B cell (primary cell): ENCODE measurements at regions of chr10 and their contacts with region 1.

Region 1: GRCh38 chr10:5813287-5814109 is at the start of gene GDI2:
- DNase-seq: peak; percentile 98
- ATAC-seq: peak; percentile 87
- H3K4me3 ChIP-seq: peak within 1 kb of the TSS; percentile 77 to 98 (median 93)
- H3K4me3 Mint-ChIP-seq: peak within 1 kb of the TSS; percentile 91
- H3K27ac ChIP-seq: peak within 1 kb of the TSS; percentile 89 to 94
- H3K27ac Mint-ChIP-seq: peak within 1 kb of the TSS; percentile 96
- H3K4me1 ChIP-seq: peaks cover 66 to 73% of the 10 kb centered on the region in 2 donors
- H3K4me1 Mint-ChIP-seq: peaks cover 73% of the 10 kb centered on the region
- H3K27me3 ChIP-seq: no peaks in the 10 kb centered on the region
- H3K27me3 Mint-ChIP-seq: no peaks in the 10 kb centered on the region
- CTCF ChIP-seq: no peak
- total RNA-seq, gene GDI2: 187 and 189 TPM in 2 replicates

Region 2: GRCh38 chr10:5033061-5033770 is 780.3 kb before region 1 on chr10:
- CTCF ChIA-PET with region 1: no interaction called
- POLR2A ChIA-PET with region 1: no interaction called
- intact Hi-C with region 1: no loop called
- DNase-seq: no peak
- ATAC-seq: no peak
- H3K4me3 ChIP-seq: no peak overlapping the region
- H3K4me3 Mint-ChIP-seq: no peak overlapping the region
- H3K27ac ChIP-seq: no peak overlapping the region
- H3K27ac Mint-ChIP-seq: no peak overlapping the region
- H3K4me1 ChIP-seq: no peaks in the 10 kb centered on the region
- H3K4me1 Mint-ChIP-seq: no peaks in the 10 kb centered on the region
- H3K27me3 ChIP-seq: peaks cover 0 to 3% (median 0%) of the 10 kb centered on the region in 4 experiments
- H3K27me3 Mint-ChIP-seq: no peaks in the 10 kb centered on the region
- CTCF ChIP-seq: no peak

Region 3: GRCh38 chr10:5446390-5446926 is 367.0 kb before region 1 on chr10:
- CTCF ChIA-PET with region 1: no interaction called
- POLR2A ChIA-PET with region 1: interaction called, 4 read pairs
- intact Hi-C with region 1: loop called (anchors 5 kb)
- DNase-seq: peak; percentile 89
- ATAC-seq: peak; percentile 96
- H3K4me3 ChIP-seq: peak overlapping the region; percentile 45 to 76 (median 62)
- H3K4me3 Mint-ChIP-seq: peak overlapping the region; percentile 91
- H3K27ac ChIP-seq: peak overlapping the region; percentile 30 to 44
- H3K27ac Mint-ChIP-seq: peak overlapping the region; percentile 87
- H3K4me1 ChIP-seq: peaks cover 20 to 21% of the 10 kb centered on the region in 2 donors
- H3K4me1 Mint-ChIP-seq: peaks cover 47% of the 10 kb centered on the region
- H3K27me3 ChIP-seq: no peaks in the 10 kb centered on the region
- H3K27me3 Mint-ChIP-seq: no peaks in the 10 kb centered on the region
- CTCF ChIP-seq: no peak

Region 4: GRCh38 chr10:5840314-5841307 is 27.1 kb after region 1 on chr10:
- CTCF ChIA-PET with region 1: interaction called, 25 read pairs
- POLR2A ChIA-PET with region 1: interaction called, 35 read pairs
- intact Hi-C with region 1: loop called (anchors 1 kb)
- DNase-seq: peak; percentile 92
- ATAC-seq: peak; percentile 82
- H3K4me3 ChIP-seq: peak overlapping the region in 4 of 5 experiments; percentile 55 to 63 (median 58)
- H3K4me3 Mint-ChIP-seq: peak overlapping the region; percentile 94
- H3K27ac ChIP-seq: peak overlapping the region; percentile 99 to 100
- H3K27ac Mint-ChIP-seq: peak overlapping the region; percentile 100
- H3K4me1 ChIP-seq: peaks cover 68 to 77% of the 10 kb centered on the region in 2 donors
- H3K4me1 Mint-ChIP-seq: peaks cover 70% of the 10 kb centered on the region
- H3K27me3 ChIP-seq: no peaks in the 10 kb centered on the region
- H3K27me3 Mint-ChIP-seq: no peaks in the 10 kb centered on the region
- CTCF ChIP-seq: no peak

Region 5: GRCh38 chr10:5873515-5873995 is 60.1 kb after region 1 on chr10:
- CTCF ChIA-PET with region 1: interaction called, 24 read pairs
- POLR2A ChIA-PET with region 1: interaction called, 6 read pairs
- intact Hi-C with region 1: loop called (anchors 1 kb)
- DNase-seq: peak; percentile 90
- ATAC-seq: peak; percentile 88
- H3K4me3 ChIP-seq: peak overlapping the region; percentile 18 to 52 (median 41)
- H3K4me3 Mint-ChIP-seq: peak overlapping the region; percentile 89
- H3K27ac ChIP-seq: peak overlapping the region; percentile 70 to 76
- H3K27ac Mint-ChIP-seq: peak overlapping the region; percentile 93
- H3K4me1 ChIP-seq: peaks cover 12 to 19% of the 10 kb centered on the region in 2 donors
- H3K4me1 Mint-ChIP-seq: peaks cover 20% of the 10 kb centered on the region
- H3K27me3 ChIP-seq: no peaks in the 10 kb centered on the region
- H3K27me3 Mint-ChIP-seq: no peaks in the 10 kb centered on the region
- CTCF ChIP-seq: peak; percentile 85

Region 6: GRCh38 chr10:5977471-5978229 is 164.2 kb after region 1 on chr10 and contains the start of gene IL15RA:
- CTCF ChIA-PET with region 1: no interaction called
- POLR2A ChIA-PET with region 1: no interaction called
- intact Hi-C with region 1: loop called (anchors 5 kb)
- DNase-seq: peak; percentile 88
- ATAC-seq: peak; percentile 77
- H3K4me3 ChIP-seq: peak within 1 kb of the TSS; percentile 74 to 96 (median 93)
- H3K4me3 Mint-ChIP-seq: peak within 1 kb of the TSS; percentile 90
- H3K27ac ChIP-seq: peak within 1 kb of the TSS; percentile 65 to 75
- H3K27ac Mint-ChIP-seq: peak within 1 kb of the TSS; percentile 95
- H3K4me1 ChIP-seq: peaks cover 8 to 27% of the 10 kb centered on the region in 2 donors
- H3K4me1 Mint-ChIP-seq: peaks cover 29% of the 10 kb centered on the region
- H3K27me3 ChIP-seq: peaks cover 0 to 3% (median 0%) of the 10 kb centered on the region in 4 experiments
- H3K27me3 Mint-ChIP-seq: no peaks in the 10 kb centered on the region
- CTCF ChIP-seq: peak; percentile 43
- total RNA-seq, gene IL15RA: 6.8 and 9.3 TPM in 2 replicates